ENCODE measurements at regions of chr4 and their contacts with region 1.

Region 1: DNA sequence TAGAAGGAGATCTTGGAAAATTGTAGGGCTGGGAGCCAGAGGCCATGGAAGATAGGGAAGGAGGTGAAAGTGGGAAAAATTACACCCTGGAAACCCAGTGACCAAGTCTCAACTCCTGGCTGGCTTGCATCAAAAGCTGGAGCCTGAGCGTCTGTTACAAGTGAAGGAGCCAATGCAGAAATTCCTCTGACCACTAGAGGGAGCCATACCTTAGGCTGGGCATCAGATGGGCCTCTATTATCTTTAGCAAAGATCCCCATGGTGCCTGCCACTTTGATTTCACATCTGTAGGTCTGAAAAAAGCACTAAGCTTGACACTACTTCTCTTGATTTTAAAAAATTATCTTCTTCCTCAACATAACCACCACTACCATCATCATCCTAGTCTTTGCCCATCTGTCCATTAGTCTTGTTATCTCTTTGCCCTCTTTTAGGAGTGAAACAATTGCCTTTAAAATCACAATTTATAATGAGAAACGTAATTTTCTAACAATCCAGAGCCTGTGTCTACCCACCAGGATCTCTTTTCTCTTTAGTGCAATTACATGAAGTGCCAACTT is 62.9 kb downstream of the ANAPC4 start:
- DNase-seq: peak; percentile 14
- H3K4me3 ChIP-seq: no peak overlapping the region
- CTCF ChIP-seq: peak; percentile 82

Region 2: GRCh38 chr4:25427871-25428270 is 12.1 kb before region 1 on chr4:
- CTCF ChIA-PET with region 1: interaction called, 56 read pairs
- POLR2A ChIA-PET with region 1: no interaction called
- DNase-seq: no peak
- H3K4me3 ChIP-seq: no peak overlapping the region
- CTCF ChIP-seq: no peak

Region 3: GRCh38 chr4:25767877-25768725 is 328.1 kb after region 1 on chr4:
- CTCF ChIA-PET with region 1: interaction called, 464 read pairs
- POLR2A ChIA-PET with region 1: interaction called, 3 read pairs
- DNase-seq: no peak
- H3K4me3 ChIP-seq: no peak overlapping the region
- CTCF ChIP-seq: peak; percentile 93

Region 4: DNA sequence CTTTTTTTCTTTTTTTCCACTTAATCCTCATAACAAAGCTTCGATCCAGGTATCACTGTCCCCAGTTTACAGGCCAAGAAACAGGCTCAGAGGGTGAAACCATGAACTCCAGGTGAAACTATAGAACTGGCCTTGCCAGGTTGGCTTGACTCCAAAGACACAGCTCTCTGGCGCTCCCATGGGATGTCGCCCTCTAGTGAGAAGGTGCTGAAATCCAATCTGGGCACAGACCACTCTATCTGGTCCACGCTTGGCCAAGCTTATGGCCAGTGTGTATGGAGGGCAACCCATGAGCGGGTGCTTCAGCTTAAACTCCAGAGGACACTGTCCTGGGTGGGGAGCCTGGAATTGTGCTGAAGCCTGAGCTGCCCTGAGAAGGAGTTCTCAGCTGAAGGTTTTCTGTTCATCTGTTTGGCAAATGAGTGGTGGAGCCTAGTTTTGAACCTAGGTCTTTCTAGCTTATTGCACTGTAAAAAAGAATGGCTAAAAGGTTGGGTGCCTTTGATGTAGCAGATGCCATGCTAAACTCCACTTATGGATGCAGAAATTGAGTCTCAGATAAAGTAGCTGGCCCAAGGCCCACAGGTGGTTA is 352.3 kb after region 1 on chr4:
- CTCF ChIA-PET with region 1: interaction called, 15 read pairs
- POLR2A ChIA-PET with region 1: no interaction called
- DNase-seq: no peak
- H3K4me3 ChIP-seq: no peak overlapping the region
- CTCF ChIP-seq: peak; percentile 42

Region 5: GRCh38 chr4:25834411-25835107 is 394.6 kb after region 1 on chr4:
- CTCF ChIA-PET with region 1: no interaction called
- POLR2A ChIA-PET with region 1: no interaction called
- DNase-seq: no peak
- H3K4me3 ChIP-seq: no peak overlapping the region
- CTCF ChIP-seq: no peak

Region 6: GRCh38 chr4:25913851-25914669 is 474.1 kb after region 1 on chr4 and contains the start of gene SMIM20:
- CTCF ChIA-PET with region 1: interaction called, 28 read pairs
- POLR2A ChIA-PET with region 1: no interaction called
- DNase-seq: peak; percentile 23
- H3K4me3 ChIP-seq: peak within 1 kb of the TSS; percentile 89
- CTCF ChIP-seq: no peak

Region 7: GRCh38 chr4:25993395-25994185 is 553.6 kb after region 1 on chr4:
- CTCF ChIA-PET with region 1: interaction called, 13 read pairs
- POLR2A ChIA-PET with region 1: no interaction called
- DNase-seq: no peak
- H3K4me3 ChIP-seq: no peak overlapping the region
- CTCF ChIP-seq: peak; percentile 5